Prostate gland (tissue), 2 donors: ENCODE measurements at regions of chr11 and their contacts with region 1.

Region 1: GRCh38 chr11:76207642-76208401 is 1.5 kb upstream of the WNT11 start:
- DNase-seq: peak; percentile 61
- H3K4me3 ChIP-seq: peak overlapping the region; percentile 36 to 41
- H3K27ac ChIP-seq: no peak overlapping the region
- H3K4me1 ChIP-seq: peaks cover 12% of the 10 kb centered on the region
- H3K27me3 ChIP-seq: no peaks in the 10 kb centered on the region
- CTCF ChIP-seq: peak; percentile 89 to 97 (median 92)
- POLR2A ChIP-seq: no peak

Region 2: DNA sequence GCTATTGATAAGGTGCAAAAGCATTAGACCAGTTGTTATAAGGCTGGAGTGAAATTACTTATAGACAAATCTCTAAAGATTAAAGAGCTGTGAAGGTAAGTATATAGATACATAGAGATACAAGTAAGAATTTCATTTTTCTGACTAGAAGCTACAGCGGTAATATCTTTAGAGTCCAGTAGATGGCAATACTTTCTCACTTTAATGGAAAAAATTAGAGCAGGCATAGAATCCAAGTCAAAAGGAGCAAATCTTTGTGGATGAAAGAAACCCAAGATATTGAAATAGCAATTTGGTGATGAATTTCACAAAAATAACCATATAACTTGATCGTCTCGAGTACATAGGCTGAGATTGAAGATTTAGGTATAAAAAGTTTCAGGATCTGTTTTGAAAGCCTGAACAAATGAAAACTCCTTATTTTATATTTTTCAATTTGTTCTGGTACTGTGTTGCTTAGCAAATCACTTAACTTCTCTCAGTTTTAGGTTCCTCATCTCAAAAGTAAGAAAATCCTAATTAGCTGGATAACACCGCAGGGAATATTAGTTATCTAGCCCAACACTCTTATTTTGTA is 310.9 kb before region 1 on chr11:
- intact Hi-C with region 1: loop called (anchors 5 kb)
- DNase-seq: no peak
- H3K4me3 ChIP-seq: no peak overlapping the region
- H3K27ac ChIP-seq: no peak overlapping the region
- H3K4me1 ChIP-seq: no peaks in the 10 kb centered on the region
- H3K27me3 ChIP-seq: no peaks in the 10 kb centered on the region
- CTCF ChIP-seq: peak; percentile 54 to 84 (median 72)
- POLR2A ChIP-seq: no peak

Region 3: DNA sequence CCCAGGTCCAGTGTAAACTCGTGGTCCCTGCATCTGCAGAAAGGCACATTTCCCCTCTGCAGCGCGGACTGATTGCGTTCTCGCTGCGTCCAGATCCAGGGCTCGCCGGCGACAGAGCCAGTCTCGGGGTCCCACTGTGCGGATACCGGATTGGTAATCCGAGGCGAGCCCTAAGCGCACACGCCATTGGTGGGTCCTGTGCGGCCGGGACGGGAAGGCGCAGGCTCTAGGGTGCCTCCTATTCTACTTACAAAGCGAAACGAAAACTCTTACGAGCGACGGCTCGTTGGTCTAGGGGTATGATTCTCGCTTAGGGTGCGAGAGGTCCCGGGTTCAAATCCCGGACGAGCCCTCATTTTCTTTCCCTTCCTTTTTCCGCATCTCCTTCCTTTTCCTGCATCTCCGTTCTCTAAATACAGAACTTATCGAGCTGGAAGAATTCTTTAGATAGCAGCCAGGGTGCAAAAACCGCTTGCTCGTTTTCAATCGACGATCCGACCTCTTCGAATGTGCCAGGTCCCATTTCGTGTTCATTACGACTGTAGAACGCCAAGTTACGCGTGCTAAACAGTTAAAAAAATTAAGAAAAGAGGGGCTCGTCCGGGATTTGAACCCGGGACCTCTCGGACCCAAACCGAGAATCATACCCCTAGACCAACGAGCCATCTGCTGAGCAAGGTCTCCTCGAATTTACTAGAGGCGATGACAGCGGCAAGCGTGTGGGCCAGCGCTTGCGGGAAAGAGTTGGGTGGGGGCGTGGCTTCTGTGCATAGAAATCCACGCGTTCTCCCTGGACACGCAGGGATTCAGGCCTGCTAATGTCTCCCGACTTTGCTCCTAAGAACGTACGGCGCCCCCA is 27.6 kb after region 1 on chr11:
- intact Hi-C with region 1: loop called (anchors 2 kb)
- DNase-seq: peak; percentile 88
- H3K4me3 ChIP-seq: peak overlapping the region; percentile 47 to 77
- H3K27ac ChIP-seq: peak overlapping the region; percentile 80 to 81
- H3K4me1 ChIP-seq: no peaks in the 10 kb centered on the region
- H3K27me3 ChIP-seq: no peaks in the 10 kb centered on the region
- CTCF ChIP-seq: peak in 1 of 4 experiments; percentile 4
- POLR2A ChIP-seq: peak; percentile 21

Region 4: GRCh38 chr11:76318744-76319384 is 111.0 kb after region 1 on chr11:
- intact Hi-C with region 1: loop called (anchors 2 kb)
- DNase-seq: peak; percentile 78
- H3K4me3 ChIP-seq: no peak overlapping the region
- H3K27ac ChIP-seq: no peak overlapping the region
- H3K4me1 ChIP-seq: no peaks in the 10 kb centered on the region
- H3K27me3 ChIP-seq: no peaks in the 10 kb centered on the region
- CTCF ChIP-seq: peak; percentile 55 to 94 (median 90)
- POLR2A ChIP-seq: no peak

Region 5: GRCh38 chr11:76444384-76445123 is 236.7 kb after region 1 on chr11 and contains the start of gene EMSY:
- intact Hi-C with region 1: loop called (anchors 10 kb)
- DNase-seq: peak; percentile 99
- H3K4me3 ChIP-seq: peak within 1 kb of the TSS; percentile 89 to 100
- H3K27ac ChIP-seq: peak within 1 kb of the TSS; percentile 93 to 95
- H3K4me1 ChIP-seq: peaks cover 6% of the 10 kb centered on the region
- H3K27me3 ChIP-seq: no peaks in the 10 kb centered on the region
- CTCF ChIP-seq: peak in 3 of 4 experiments; percentile 6 to 24 (median 7)
- POLR2A ChIP-seq: peak; percentile 95
- total RNA-seq, gene EMSY: 24.3 to 39.4 TPM

Region 6: DNA sequence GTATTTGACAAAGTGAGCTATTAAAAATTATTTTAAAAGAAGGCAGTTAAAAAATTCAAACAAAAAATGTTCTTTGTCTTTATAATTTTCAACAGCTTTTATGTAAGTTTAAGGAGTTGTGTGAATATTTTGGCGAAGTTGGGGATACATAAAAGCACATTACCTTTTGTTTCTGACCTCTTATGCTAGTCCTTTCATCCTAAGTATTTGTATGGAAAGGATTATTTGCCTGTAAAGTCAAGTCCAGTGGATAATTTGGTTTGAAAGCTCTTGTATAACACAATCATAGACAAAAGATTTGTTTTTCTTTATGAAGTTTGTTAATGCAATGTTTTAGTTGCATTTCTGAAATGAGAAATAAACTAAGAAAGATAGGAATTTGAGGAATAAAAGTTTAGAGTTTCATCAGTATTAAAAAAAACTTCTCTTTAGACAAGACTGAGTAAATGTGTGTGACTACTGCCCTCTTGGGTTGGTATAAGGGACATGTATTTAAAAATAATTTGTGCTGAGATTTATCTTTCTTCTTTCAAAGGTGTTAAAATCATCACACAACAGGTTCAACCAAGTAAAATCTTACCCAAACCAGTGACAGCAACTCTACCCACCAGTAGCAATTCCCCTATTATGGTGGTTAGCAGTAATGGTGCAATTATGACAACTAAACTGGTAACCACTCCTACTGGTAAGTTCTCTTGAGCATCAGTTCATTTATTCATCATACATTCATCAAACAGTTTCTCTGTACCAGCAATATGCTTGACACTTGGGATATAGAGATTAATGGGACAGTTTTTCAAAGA is 305.2 kb after region 1 on chr11:
- intact Hi-C with region 1: loop called (anchors 2 kb)
- DNase-seq: no peak
- H3K4me3 ChIP-seq: no peak overlapping the region
- H3K27ac ChIP-seq: no peak overlapping the region
- H3K4me1 ChIP-seq: peaks cover 4% of the 10 kb centered on the region
- H3K27me3 ChIP-seq: no peaks in the 10 kb centered on the region
- CTCF ChIP-seq: peak in 2 of 4 experiments; percentile 25 to 37
- POLR2A ChIP-seq: no peak